WTC11 (cell line): ENCODE measurements at regions of chr11 and their contacts with region 1.

Region 1: DNA sequence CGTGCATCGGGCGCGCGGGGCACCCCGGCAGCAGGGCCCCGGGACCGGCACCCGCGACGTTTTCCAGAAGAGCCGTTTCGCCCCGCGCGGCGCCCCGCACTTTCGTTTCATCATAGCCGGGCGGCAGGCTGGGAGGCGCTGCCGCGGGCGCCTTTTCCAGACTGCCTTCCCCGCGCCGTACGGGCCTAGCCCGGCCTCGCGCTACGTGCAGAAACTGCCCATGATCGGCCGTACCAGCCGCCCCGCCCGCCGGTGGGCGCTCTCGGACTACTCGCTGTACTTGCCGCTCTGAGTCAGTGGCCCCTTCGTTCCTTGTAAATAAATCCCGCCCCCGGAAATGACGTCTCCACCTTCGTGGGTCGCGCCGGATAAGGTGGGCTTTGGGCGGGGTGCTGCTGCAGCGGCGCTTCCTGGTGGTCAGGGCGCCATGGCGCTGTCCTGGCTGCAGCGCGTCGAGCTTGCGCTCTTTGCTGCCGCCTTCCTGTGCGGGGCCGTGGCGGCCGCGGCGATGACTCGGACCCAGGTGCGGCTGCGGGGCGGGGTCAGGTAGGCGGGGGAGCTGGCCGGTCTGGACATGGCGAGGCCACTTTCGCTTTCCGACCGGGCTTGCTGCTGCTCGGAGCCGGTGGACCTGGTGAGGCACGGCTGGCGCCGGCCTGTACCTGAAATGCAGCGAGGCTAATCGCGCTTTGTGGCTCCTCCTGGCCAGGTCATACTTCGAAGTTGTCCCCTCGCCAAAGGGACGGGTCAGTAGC is at the start of gene TMEM179B:
- DNase-seq: peak; percentile 99
- ATAC-seq: peak; percentile 74
- H3K4me3 Mint-ChIP-seq: peak within 1 kb of the TSS; percentile 91
- H3K27ac Mint-ChIP-seq: peak within 1 kb of the TSS; percentile 99
- H3K4me1 Mint-ChIP-seq: peaks cover 33% of the 10 kb centered on the region
- H3K27me3 Mint-ChIP-seq: no peaks in the 10 kb centered on the region; the same call in 1 of the 2 replicates
- CTCF ChIP-seq: no peak
- total RNA-seq, gene TMEM179B: 21.4 to 23.6 TPM (median 22.2 TPM) in 3 replicates

Region 2: GRCh38 chr11:62665075-62665598 is 122.0 kb before region 1 on chr11 and contains the starts of genes C11orf98 and CSKMT:
- CTCF ChIA-PET with region 1: interaction called, 10 read pairs
- POLR2A ChIA-PET with region 1: interaction called, 19 read pairs
- DNase-seq: peak; percentile 97
- ATAC-seq: peak; percentile 79
- H3K4me3 Mint-ChIP-seq: peak within 1 kb of the TSS; percentile 97
- H3K27ac Mint-ChIP-seq: peak within 1 kb of the TSS; percentile 95
- H3K4me1 Mint-ChIP-seq: peaks cover 20% of the 10 kb centered on the region
- H3K27me3 Mint-ChIP-seq: no peaks in the 10 kb centered on the region
- CTCF ChIP-seq: no peak
- total RNA-seq, gene C11orf98: 132 to 154 TPM (median 137 TPM) in 3 replicates
- total RNA-seq, gene CSKMT: 60.7 to 75.6 TPM (median 60.9 TPM) in 3 replicates

Region 3: DNA sequence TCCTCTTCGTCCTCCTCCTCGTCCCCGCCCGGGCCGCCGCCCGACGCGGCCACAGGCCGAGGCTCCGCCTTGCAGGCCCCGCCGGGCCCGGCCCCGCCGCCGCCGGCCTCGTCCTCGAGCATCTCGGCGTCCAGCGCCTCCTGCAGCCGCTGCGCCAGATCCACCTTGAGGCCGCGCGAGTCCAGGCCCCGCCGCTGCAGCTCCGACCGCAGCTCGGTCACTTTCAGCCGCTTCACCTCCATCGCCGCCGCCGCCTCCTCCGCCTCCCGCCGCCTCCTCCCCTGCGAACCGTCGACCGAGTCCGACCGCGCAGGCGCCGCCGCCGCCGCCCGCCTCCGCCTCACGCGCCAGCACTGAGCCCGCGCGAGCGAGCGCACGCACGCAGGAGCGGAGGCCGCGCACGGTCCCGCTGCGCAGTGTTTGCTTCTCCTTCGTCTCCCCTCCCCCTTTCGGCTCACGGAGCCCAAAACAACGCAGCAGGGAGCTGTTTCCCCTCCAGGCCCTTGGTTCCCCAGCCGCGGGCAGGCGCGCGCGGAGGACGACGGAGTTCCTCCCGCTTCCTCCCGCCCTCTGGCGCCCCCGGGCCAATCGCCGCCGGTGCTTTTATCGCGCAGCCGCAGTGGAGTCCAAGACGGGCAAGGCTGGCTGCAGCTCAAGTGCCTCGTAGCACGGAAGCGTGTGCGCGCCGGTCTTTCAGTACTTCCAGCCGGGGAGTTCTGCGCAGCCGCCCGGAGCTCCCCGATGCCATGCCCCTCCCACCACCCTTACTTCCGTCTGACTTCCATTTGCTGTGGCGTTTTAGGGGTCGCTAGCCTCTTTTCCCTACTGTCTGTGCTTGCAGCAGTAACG is 60.0 kb before region 1 on chr11 and contains the start of gene HNRNPUL2:
- CTCF ChIA-PET with region 1: interaction called, 44 read pairs
- POLR2A ChIA-PET with region 1: interaction called, 5 read pairs
- DNase-seq: peak; percentile 98
- ATAC-seq: peak; percentile 89
- H3K4me3 Mint-ChIP-seq: peak within 1 kb of the TSS; percentile 98
- H3K27ac Mint-ChIP-seq: peak within 1 kb of the TSS; percentile 100
- H3K4me1 Mint-ChIP-seq: peaks cover 25% of the 10 kb centered on the region
- H3K27me3 Mint-ChIP-seq: peaks cover 4% of the 10 kb centered on the region; the same call in 1 of the 2 replicates
- CTCF ChIP-seq: no peak
- total RNA-seq, gene HNRNPUL2: 42.1 to 42.9 TPM (median 42.2 TPM) in 3 replicates

Region 4: DNA sequence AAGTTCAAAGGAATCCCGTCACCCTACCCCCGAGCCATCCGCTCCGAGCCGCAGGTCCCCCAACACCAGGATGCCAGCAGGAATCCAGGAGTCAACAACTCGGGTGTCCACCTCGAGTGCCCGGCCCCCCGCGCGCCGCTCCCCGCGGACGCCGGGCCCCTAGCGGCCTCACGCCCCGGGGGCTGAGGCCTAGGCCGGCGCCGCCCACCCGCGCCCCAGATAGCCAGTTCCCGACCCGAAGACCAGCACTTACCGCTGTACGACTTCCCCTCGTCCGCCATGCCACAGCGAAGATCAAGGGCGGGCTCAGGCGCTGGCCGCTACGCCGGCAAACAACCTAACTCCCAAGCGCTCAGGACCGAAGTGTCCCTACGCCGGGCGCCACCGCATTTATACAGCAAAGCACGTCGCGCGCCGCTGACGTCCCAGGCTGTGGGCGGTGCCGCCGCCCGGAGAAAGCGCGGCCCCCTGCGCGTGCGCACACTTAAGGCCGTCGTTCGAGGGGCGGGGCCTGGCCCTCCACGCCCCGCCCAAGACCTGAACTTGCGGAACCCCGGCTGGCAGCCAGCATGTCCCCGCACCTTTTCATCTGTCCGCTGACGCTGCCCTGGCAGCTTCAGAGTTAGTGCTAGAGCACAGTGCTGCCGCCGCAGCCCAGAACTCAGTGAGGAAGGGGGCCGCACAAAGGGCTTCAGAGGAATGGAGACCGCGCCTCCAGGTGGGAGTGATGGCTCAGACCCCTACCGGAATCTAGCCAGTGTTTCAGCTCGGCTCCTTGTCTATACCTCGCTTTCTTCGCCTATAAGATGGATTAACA is 18.1 kb after region 1 on chr11 and contains the start of gene NXF1:
- CTCF ChIA-PET with region 1: interaction called, 23 read pairs
- POLR2A ChIA-PET with region 1: interaction called, 5 read pairs
- DNase-seq: peak; percentile 95
- ATAC-seq: peak; percentile 85
- H3K4me3 Mint-ChIP-seq: peak within 1 kb of the TSS; percentile 98
- H3K27ac Mint-ChIP-seq: peak within 1 kb of the TSS; percentile 96
- H3K4me1 Mint-ChIP-seq: peaks cover 22% of the 10 kb centered on the region
- H3K27me3 Mint-ChIP-seq: no peaks in the 10 kb centered on the region
- CTCF ChIP-seq: no peak
- total RNA-seq, gene NXF1: 43.2 to 44.7 TPM (median 44.3 TPM) in 3 replicates

Region 5: GRCh38 chr11:62855571-62856332 is 68.6 kb after region 1 on chr11:
- CTCF ChIA-PET with region 1: interaction called, 17 read pairs
- POLR2A ChIA-PET with region 1: interaction called, 6 read pairs
- DNase-seq: peak; percentile 98
- ATAC-seq: peak; percentile 73
- H3K4me3 Mint-ChIP-seq: peak overlapping the region; percentile 99
- H3K27ac Mint-ChIP-seq: peak overlapping the region; percentile 99
- H3K4me1 Mint-ChIP-seq: peaks cover 60% of the 10 kb centered on the region
- H3K27me3 Mint-ChIP-seq: 0 out of 2 replicates have a peak, but pooled peaks cover 4% of the 10 kb centered on the region
- CTCF ChIP-seq: no peak

Region 6: GRCh38 chr11:62905927-62906531 is 118.8 kb after region 1 on chr11:
- CTCF ChIA-PET with region 1: interaction called, 12 read pairs
- POLR2A ChIA-PET with region 1: no interaction called
- DNase-seq: peak; percentile 94
- ATAC-seq: peak; percentile 54
- H3K4me3 Mint-ChIP-seq: no peak overlapping the region
- H3K27ac Mint-ChIP-seq: no peak overlapping the region
- H3K4me1 Mint-ChIP-seq: peaks cover 31% of the 10 kb centered on the region
- H3K27me3 Mint-ChIP-seq: peaks cover 13% of the 10 kb centered on the region
- CTCF ChIP-seq: peak; percentile 99